GM13976 (cell line): ENCODE measurements at regions of chr22 and their contacts with region 1.

Region 1: DNA sequence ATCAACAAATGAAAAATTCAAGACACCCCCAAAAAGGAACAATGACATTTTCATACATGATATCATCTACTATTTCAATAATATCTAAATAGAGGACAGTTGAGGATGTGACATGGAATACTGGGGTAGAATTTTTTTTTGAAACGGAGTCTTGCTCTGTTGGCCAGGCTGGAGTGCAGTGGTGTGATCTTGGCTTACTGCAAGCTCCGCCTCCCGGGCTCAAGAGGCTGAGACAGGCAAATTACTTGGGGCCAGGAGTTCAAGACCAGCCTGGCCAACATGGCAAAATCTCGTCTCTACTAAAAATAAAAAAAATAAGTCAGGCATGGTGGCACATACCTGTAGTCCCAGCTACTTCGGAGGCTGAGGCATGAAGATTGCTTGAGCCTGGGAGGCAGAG is 41.4 kb downstream of the LRRC74B start:
- DNase-seq: no peak
- CTCF ChIP-seq: no peak

Region 2: GRCh38 chr22:21038405-21038804 is 48.7 kb before region 1 on chr22:
- in situ Hi-C with region 1: loop called (anchors 5 kb)
- DNase-seq: no peak
- CTCF ChIP-seq: no peak